ENCODE measurements at regions of chr16 and their contacts with region 1.

Region 1: GRCh38 chr16:81403616-81404373 is 40.8 kb upstream of the CMIP start:
- DNase-seq: peak; percentile 96

Region 2: DNA sequence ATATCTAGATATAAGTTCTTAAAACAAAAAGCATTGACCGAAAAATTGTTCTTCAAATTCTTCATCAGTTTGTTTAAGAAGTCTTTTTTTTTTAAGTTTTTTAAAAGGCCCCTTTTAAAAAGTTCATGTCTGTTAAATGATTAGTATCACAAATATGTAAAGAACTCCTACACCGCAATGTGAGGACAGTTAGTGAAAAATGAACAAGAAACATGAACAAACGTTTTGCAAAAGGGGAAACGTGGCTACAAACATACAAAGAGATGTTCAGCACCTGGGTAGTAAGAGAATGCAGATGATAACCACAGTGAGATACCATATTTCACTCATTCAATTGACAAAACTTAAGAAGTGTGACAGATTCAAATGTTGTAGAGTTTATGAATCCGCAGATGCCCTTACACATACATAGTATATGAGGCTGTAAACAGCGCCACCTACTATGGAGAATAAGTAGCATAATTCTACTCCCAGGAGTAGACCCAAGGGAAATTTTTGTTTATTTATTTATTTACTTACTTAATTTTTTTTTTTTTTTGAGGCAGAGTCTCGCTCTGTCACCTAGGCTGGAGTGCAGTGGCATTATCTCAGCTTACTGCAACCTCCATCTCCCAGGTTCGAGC is 53.7 kb before region 1 on chr16:
- intact Hi-C with region 1: no loop called
- DNase-seq: no peak

Region 3: DNA sequence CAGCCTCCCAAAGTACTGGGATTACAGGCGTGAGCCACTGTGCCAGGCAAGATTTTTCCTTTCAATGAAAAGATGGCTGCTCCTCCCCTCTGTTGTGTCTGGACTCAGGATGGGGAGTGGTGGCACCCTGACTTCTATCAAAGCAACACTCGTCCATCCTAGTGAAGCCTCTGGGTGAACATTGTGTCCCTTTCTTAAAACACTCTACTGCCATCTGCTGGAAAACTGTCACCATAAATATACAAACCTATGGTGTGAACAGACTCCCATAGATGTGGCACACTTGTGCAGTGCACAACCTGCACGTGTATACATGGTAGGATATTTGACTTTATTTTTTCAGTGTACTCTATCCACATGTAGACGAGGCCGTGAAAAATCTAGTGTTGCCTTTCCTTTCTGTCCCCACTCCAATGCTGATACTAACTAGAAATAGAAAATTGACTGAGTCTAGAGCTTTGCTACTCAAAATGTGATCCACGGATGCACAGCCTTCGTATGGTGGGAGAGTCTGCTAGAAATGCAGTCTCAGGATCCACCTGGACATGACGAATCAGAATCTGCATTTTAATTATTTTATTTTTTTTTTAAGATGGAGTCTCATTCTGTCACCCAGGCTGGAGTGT is 319.4 kb after region 1 on chr16:
- intact Hi-C with region 1: loop called (anchors 5 kb)
- DNase-seq: peak; percentile 23

Measured in posterior vena cava (tissue), 2 donors.